Panc1 (cell line): ENCODE measurements at regions of chr7 and their contacts with region 1.

Region 1: GRCh38 chr7:140249036-140249806 is 72.4 kb upstream of the KDM7A start:
- DNase-seq: no peak
- ATAC-seq: no peak
- H3K4me3 ChIP-seq: no peak overlapping the region
- H3K27ac ChIP-seq: no peak overlapping the region
- H3K4me1 ChIP-seq: no peaks in the 10 kb centered on the region
- H3K27me3 ChIP-seq: no peaks in the 10 kb centered on the region
- CTCF ChIP-seq: no peak

Region 2: GRCh38 chr7:139192014-139192706 is 1057.1 kb before region 1 on chr7:
- CTCF ChIA-PET with region 1: no interaction called
- POLR2A ChIA-PET with region 1: interaction called, 11 read pairs
- in situ Hi-C with region 1: no loop called
- intact Hi-C with region 1: no loop called
- DNase-seq: no peak
- ATAC-seq: no peak
- H3K4me3 ChIP-seq: no peak overlapping the region
- H3K27ac ChIP-seq: no peak overlapping the region
- H3K4me1 ChIP-seq: no peaks in the 10 kb centered on the region
- H3K27me3 ChIP-seq: no peaks in the 10 kb centered on the region
- CTCF ChIP-seq: no peak

Region 3: DNA sequence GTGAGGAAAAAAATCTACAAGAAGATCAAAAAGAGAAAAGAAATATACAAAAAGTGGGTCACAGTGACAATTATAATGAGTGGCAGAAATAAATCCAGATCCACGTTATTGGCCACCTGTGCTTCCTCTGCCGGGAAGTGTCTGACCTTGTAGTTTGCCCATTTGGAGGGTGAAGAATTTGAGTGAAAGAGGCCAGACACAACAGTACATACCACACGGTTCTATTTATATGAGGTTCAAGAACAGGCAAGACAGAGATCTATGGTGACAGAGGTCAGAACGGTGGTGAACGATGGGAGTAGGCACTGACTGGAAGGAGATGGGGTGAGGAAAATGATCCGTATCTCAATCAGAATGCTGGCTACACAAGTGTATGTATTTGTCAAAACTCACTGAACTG is 203.5 kb before region 1 on chr7:
- CTCF ChIA-PET with region 1: interaction called, 12 read pairs
- POLR2A ChIA-PET with region 1: no interaction called
- in situ Hi-C with region 1: no loop called
- intact Hi-C with region 1: no loop called
- DNase-seq: no peak
- ATAC-seq: no peak
- H3K4me3 ChIP-seq: no peak overlapping the region
- H3K27ac ChIP-seq: no peak overlapping the region
- H3K4me1 ChIP-seq: no peaks in the 10 kb centered on the region
- H3K27me3 ChIP-seq: no peaks in the 10 kb centered on the region
- CTCF ChIP-seq: no peak